ENCODE measurements at regions of chr3 and their contacts with region 1.

Region 1: DNA sequence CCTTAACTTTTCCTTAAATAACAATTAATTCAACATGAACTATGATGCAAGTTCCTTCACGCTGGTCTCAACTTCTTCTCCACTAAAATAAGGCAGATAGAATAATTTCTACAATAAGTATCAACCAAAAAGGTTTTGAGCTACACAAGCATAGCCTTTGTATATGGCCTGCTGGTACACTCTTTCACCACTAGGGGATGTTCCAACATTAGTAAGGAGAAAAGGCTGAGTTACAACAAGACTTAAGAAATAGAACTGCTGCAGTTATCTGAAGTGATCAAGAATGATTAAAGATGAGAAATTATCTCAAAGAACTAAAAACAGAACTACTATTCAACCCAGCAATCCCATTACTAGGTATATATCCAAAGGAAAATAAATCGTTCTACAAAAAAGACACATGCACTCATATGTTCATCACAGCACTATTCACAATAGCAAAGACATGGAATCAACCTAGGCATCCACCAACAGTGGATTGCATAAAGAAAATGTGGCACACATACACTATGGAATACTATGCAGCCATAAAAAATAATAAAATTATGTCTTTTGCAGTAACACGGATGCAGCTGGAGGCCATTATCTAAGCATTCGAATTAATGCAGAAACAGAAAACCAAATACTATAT is 14.4 kb downstream of the ATP13A3 start:
- DNase-seq: peak; percentile 85
- ATAC-seq: peak; percentile 84
- H3K4me3 ChIP-seq: no peak overlapping the region
- H3K27ac ChIP-seq: no peak overlapping the region
- H3K4me1 ChIP-seq: no peaks in the 10 kb centered on the region
- H3K27me3 ChIP-seq: no peaks in the 10 kb centered on the region
- CTCF ChIP-seq: peak; percentile 95

Region 2: DNA sequence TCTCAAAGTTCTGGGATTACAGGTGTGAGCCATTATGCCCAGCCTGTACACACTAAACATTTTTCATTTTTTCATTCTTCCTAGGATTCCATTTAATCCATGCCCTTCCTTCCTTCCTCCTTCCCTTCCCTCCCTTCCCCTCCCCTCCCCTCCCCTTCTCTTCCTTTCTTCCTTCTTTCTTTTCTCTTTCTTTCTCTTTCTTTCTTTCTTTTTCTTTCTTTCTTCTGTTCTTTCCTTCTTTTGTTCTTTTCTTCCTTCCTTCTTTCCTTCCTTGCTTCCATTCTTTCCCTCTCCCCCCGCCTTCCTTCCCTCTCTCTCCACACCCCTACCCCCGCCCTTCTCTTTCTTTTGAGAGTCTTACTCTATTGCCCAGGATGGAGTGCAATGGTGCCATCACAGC is 55.3 kb after region 1 on chr3:
- CTCF ChIA-PET with region 1: interaction called, 4 read pairs
- POLR2A ChIA-PET with region 1: no interaction called
- intact Hi-C with region 1: loop called (anchors 1 kb)
- DNase-seq: no peak
- ATAC-seq: no peak
- H3K4me3 ChIP-seq: no peak overlapping the region; the same call in 1 of the 2 replicates
- H3K27ac ChIP-seq: peak overlapping the region; percentile 94
- H3K4me1 ChIP-seq: peaks cover 13% of the 10 kb centered on the region
- H3K27me3 ChIP-seq: no peaks in the 10 kb centered on the region
- CTCF ChIP-seq: no peak

Measured in PC-3 (cell line).